ENCODE measurements at regions of chr11 and their contacts with region 1.

Region 1: GRCh38 chr11:72585762-72586311 is 88.4 kb downstream of the PDE2A start:
- DNase-seq: peak; percentile 93
- CTCF ChIP-seq: peak; percentile 78

Region 2: GRCh38 chr11:72642884-72643511 is 57.2 kb after region 1 on chr11:
- in situ Hi-C with region 1: loop called (anchors 10 kb)
- DNase-seq: peak; percentile 94
- CTCF ChIP-seq: peak; percentile 96

Region 3: GRCh38 chr11:73047773-73048371 is 462.0 kb after region 1 on chr11:
- in situ Hi-C with region 1: no loop called
- DNase-seq: peak; percentile 27
- CTCF ChIP-seq: no peak